CD4-positive, alpha-beta T cell (primary cell): ENCODE measurements at regions of chr17 and their contacts with region 1.

Region 1: DNA sequence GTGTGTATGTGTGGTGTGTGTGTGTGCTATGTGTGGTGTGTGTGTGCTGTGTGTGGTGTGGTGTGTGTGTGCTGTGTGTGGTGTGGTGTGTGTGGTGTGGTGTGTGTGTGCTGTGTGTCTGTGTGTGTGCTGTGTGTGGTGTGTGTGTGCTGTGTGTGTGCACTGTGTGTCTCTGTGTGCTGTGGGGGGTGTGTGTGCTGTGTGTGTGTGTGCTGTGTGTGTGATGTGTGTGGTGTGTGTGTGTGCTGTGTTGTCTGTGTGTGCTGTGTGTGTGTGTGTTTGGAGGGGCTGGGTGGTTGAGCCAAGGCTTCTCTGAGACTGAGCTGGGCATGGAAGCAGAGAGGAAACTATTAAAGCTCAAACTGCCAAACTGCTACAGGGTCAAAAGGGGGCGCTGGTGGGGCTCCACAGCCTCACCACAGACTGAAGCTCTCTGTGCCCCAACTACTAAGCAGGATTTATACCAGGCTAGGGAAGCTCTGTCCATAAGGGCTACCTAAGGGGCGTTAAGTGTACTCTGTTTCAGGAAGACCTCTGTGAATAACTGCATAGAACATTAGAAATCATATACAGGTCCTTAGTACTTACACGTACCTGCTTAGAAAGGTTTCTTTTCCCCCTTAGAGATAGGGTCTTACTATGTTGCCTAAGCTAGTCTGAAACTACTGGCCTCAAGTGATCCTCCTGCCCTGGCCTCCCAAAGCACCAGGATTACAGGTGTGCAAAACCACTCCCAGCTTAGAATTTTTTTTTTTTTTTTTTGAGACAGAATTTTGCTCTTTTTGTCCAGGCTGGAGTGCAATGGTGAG is 27.8 kb upstream of the GHDC start:
- DNase-seq: peak; percentile 46 to 85 (median 56)
- ATAC-seq: peak; percentile 99
- H3K4me3 ChIP-seq: no peak overlapping the region
- H3K4me3 Mint-ChIP-seq: no peak overlapping the region
- H3K27ac ChIP-seq: no peak overlapping the region
- H3K27ac Mint-ChIP-seq: peak overlapping the region; percentile 49
- H3K4me1 ChIP-seq: peaks cover 7% of the 10 kb centered on the region
- H3K4me1 Mint-ChIP-seq: peaks cover 10% of the 10 kb centered on the region
- H3K27me3 ChIP-seq: no peaks in the 10 kb centered on the region
- H3K27me3 Mint-ChIP-seq: no peaks in the 10 kb centered on the region
- CTCF ChIP-seq: peak; percentile 62

Region 2: DNA sequence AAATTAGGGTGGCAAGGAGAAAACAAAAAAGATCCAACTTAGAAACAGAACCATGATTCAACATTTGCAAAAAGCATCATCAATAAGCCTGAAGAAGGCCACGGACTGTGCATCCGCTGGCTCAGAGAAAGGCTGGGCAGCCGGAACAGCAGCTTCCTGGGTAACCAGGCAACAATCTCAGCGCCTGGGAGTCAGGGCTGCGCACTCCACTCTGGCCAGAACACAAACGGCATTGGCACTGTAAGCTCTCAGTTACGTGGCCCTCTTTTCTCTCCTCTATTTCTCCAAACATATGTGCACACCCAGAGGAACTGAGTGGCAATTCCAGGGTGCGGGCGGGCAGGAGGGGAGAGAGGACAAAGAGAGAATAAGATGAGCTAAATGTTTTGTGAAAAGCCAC is 21.4 kb before region 1 on chr17:
- CTCF ChIA-PET with region 1: interaction called, 11 read pairs
- POLR2A ChIA-PET with region 1: no interaction called
- intact Hi-C with region 1: no loop called
- DNase-seq: no peak
- ATAC-seq: no peak
- H3K4me3 ChIP-seq: no peak overlapping the region
- H3K4me3 Mint-ChIP-seq: no peak overlapping the region
- H3K27ac ChIP-seq: no peak overlapping the region
- H3K27ac Mint-ChIP-seq: no peak overlapping the region
- H3K4me1 ChIP-seq: no peaks in the 10 kb centered on the region
- H3K4me1 Mint-ChIP-seq: no peaks in the 10 kb centered on the region
- H3K27me3 ChIP-seq: no peaks in the 10 kb centered on the region
- H3K27me3 Mint-ChIP-seq: no peaks in the 10 kb centered on the region
- CTCF ChIP-seq: no peak

Region 3: DNA sequence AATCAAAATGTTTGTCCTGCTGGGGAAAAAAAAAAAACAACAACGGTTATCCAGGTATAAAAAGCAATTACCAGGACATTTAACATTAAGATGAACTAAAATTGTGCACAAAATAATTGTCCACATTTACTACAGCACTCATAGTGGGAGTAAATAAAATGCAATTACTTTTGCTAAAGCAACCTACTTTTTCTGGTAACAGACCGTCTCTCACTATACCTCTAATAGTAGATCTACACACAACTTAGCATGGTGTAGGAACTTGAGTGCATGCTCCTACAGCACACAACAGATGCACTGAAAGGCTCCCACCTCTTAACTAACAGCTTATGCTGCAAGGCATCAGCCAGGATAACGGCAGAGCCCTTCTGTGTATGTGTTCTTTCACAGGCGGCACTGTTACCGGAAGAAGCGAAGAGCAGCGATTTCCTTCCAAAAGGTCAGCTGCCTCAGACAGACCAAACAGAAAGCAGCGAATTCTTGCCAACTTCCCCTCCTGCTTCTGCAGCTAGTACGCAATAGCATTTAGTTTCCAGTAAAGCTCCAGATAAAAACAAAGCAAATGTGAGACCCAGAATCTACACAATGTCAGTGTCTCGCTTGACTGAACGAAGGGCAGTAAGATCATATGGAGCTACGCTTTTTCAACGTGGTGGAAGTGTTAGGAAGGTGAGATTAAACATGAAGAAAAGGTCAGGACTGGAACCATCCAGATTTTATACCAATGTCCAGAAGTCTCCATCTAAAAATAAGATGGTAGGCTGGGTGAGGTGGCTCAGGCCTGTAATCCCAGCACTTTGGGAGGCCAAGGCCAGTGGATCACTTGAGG is 26.4 kb after region 1 on chr17:
- CTCF ChIA-PET with region 1: interaction called, 47 read pairs
- POLR2A ChIA-PET with region 1: interaction called, 46 read pairs
- intact Hi-C with region 1: loop called in 1 of 2 experiments (anchors 2 kb)
- DNase-seq: peak; percentile 64 to 94 (median 80)
- ATAC-seq: peak; percentile 86
- H3K4me3 ChIP-seq: peak overlapping the region; percentile 42
- H3K4me3 Mint-ChIP-seq: peak overlapping the region; percentile 85
- H3K27ac ChIP-seq: peak overlapping the region; percentile 85 to 86
- H3K27ac Mint-ChIP-seq: peak overlapping the region; percentile 96
- H3K4me1 ChIP-seq: peaks cover 55% of the 10 kb centered on the region
- H3K4me1 Mint-ChIP-seq: peaks cover 66% of the 10 kb centered on the region
- H3K27me3 ChIP-seq: no peaks in the 10 kb centered on the region
- H3K27me3 Mint-ChIP-seq: no peaks in the 10 kb centered on the region
- CTCF ChIP-seq: no peak

Region 4: GRCh38 chr17:42276359-42276608 is 54.1 kb after region 1 on chr17 and contains the start of gene STAT5B:
- CTCF ChIA-PET with region 1: interaction called, 35 read pairs
- POLR2A ChIA-PET with region 1: interaction called, 24 read pairs
- intact Hi-C with region 1: loop called in 1 of 2 experiments (anchors 1 kb)
- DNase-seq: peak; percentile 33 to 89 (median 63)
- ATAC-seq: peak; percentile 32
- H3K4me3 ChIP-seq: peak within 1 kb of the TSS; percentile 91
- H3K4me3 Mint-ChIP-seq: peak within 1 kb of the TSS; percentile 92
- H3K27ac ChIP-seq: peak within 1 kb of the TSS; percentile 67 to 76
- H3K27ac Mint-ChIP-seq: peak within 1 kb of the TSS; percentile 91
- H3K4me1 ChIP-seq: peaks cover 16% of the 10 kb centered on the region
- H3K4me1 Mint-ChIP-seq: peaks cover 49% of the 10 kb centered on the region
- H3K27me3 ChIP-seq: no peaks in the 10 kb centered on the region
- H3K27me3 Mint-ChIP-seq: no peaks in the 10 kb centered on the region
- CTCF ChIP-seq: no peak
- total RNA-seq, gene STAT5B: 99.4 to 104 TPM

Region 5: GRCh38 chr17:42312285-42313130 is 90.4 kb after region 1 on chr17:
- CTCF ChIA-PET with region 1: interaction called, 36 read pairs
- POLR2A ChIA-PET with region 1: interaction called, 6 read pairs
- intact Hi-C with region 1: loop called in 1 of 2 experiments (anchors 1 kb)
- DNase-seq: peak; percentile 62 to 91 (median 73)
- ATAC-seq: peak; percentile 61
- H3K4me3 ChIP-seq: peak overlapping the region; percentile 40
- H3K4me3 Mint-ChIP-seq: peak overlapping the region; percentile 80
- H3K27ac ChIP-seq: peak overlapping the region; percentile 41 to 64
- H3K27ac Mint-ChIP-seq: peak overlapping the region; percentile 82
- H3K4me1 ChIP-seq: peaks cover 66% of the 10 kb centered on the region
- H3K4me1 Mint-ChIP-seq: peaks cover 82% of the 10 kb centered on the region
- H3K27me3 ChIP-seq: no peaks in the 10 kb centered on the region
- H3K27me3 Mint-ChIP-seq: no peaks in the 10 kb centered on the region
- CTCF ChIP-seq: peak; percentile 59

Region 6: GRCh38 chr17:42361781-42362186 is 139.6 kb after region 1 on chr17:
- CTCF ChIA-PET with region 1: no interaction called
- POLR2A ChIA-PET with region 1: no interaction called
- intact Hi-C with region 1: no loop called
- DNase-seq: peak in 11 of 14 experiments; percentile 5 to 59 (median 23)
- ATAC-seq: peak; percentile 85
- H3K4me3 ChIP-seq: no peak overlapping the region
- H3K4me3 Mint-ChIP-seq: no peak overlapping the region
- H3K27ac ChIP-seq: peak overlapping the region in 1 of 2 donors; percentile 11
- H3K27ac Mint-ChIP-seq: peak overlapping the region; percentile 75
- H3K4me1 ChIP-seq: peaks cover 47% of the 10 kb centered on the region
- H3K4me1 Mint-ChIP-seq: peaks cover 81% of the 10 kb centered on the region
- H3K27me3 ChIP-seq: no peaks in the 10 kb centered on the region
- H3K27me3 Mint-ChIP-seq: no peaks in the 10 kb centered on the region
- CTCF ChIP-seq: no peak

Region 7: GRCh38 chr17:42405963-42406495 is 183.9 kb after region 1 on chr17:
- CTCF ChIA-PET with region 1: interaction called, 16 read pairs
- POLR2A ChIA-PET with region 1: interaction called, 4 read pairs
- intact Hi-C with region 1: loop called (anchors 1 to 2 kb)
- DNase-seq: peak; percentile 70 to 90 (median 82)
- ATAC-seq: peak; percentile 88
- H3K4me3 ChIP-seq: no peak overlapping the region
- H3K4me3 Mint-ChIP-seq: no peak overlapping the region
- H3K27ac ChIP-seq: no peak overlapping the region
- H3K27ac Mint-ChIP-seq: no peak overlapping the region
- H3K4me1 ChIP-seq: peaks cover 13% of the 10 kb centered on the region
- H3K4me1 Mint-ChIP-seq: peaks cover 11% of the 10 kb centered on the region
- H3K27me3 ChIP-seq: no peaks in the 10 kb centered on the region
- H3K27me3 Mint-ChIP-seq: no peaks in the 10 kb centered on the region
- CTCF ChIP-seq: peak; percentile 76